Ascending aorta (tissue), 2 donors: ENCODE measurements at regions of chr12 and their contacts with region 1.

Region 1: DNA sequence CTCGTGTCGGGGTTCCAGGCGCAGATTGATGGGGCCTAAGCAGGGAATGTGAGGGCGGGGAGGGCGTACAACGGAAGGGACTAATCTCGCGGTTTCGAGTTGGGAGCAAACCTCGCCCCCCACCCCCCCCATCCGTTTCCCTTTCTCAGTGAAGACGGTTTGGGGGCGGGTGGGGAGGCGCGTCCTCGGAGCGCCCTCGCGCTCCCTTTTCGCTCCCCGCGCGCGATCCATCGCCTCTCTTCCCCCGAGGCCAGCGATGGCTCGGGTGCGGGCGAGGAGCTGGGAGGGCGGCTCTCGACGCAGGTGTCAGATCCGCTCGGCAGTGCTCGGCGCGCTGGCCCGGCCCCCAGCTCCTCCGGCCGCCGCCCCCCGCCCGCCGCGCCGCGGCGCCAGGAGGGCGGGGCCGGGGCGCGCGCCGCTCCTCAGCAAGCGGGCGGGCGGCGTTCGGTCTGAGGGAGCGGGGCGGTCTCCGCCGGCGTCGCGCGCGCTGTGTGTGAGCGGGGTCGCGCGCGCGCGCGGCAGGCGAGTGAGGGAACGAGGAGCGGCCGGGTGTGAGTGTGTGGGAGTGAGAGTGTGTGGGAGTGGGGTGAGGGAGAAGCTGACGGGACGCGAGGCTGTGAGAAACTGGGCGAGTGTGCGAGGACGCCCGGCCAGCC is at the start of gene RIMKLB:
- DNase-seq: peak; percentile 33 to 93
- H3K4me3 ChIP-seq: peak within 1 kb of the TSS; percentile 81 to 92
- H3K27ac ChIP-seq: peak within 1 kb of the TSS; percentile 97 to 99
- H3K4me1 ChIP-seq: peaks cover 2 to 20% of the 10 kb centered on the region in 2 donors
- H3K27me3 ChIP-seq: no peaks in the 10 kb centered on the region
- CTCF ChIP-seq: no peak
- total RNA-seq, gene RIMKLB: 26.0 TPM

Region 2: GRCh38 chr12:7806863-7807487 is 890.6 kb before region 1 on chr12:
- intact Hi-C with region 1: no loop called
- DNase-seq: peak in 1 of 2 donors; percentile 73
- H3K4me3 ChIP-seq: no peak overlapping the region
- H3K27ac ChIP-seq: no peak overlapping the region
- H3K4me1 ChIP-seq: no peaks in the 10 kb centered on the region
- H3K27me3 ChIP-seq: no peaks in the 10 kb centered on the region
- CTCF ChIP-seq: peak; percentile 24 to 70 (median 57)

Region 3: DNA sequence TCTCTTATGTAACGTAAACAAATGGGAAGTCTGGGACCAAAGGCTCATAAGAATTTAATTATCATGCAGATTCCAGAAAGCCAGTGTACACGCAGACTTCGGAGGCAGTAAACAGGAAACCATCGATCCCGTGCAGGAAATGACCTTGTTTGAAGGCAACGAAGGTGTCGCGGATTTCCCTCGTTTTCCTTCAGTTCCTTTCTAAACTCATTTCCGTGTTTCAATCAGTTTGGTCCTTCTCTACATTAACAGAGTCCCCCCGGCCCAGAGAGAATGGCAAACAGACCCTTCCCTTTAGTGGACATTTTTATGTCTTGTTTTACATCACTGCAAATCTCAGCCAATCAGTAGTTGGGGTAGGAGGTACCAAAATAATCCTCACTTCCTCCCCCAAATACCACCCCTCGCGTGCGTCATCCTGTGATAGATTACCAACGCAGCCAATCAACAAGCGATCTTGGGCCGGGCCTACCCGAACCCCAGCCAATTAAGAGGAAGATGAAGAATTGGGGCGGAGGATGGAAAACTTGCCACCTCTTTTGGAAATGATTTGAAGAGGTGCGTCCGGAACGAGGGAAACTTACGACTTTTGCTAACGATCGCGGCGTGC is 671.2 kb before region 1 on chr12:
- intact Hi-C with region 1: loop called (anchors 5 kb)
- DNase-seq: peak; percentile 96 to 99
- H3K4me3 ChIP-seq: peak overlapping the region; percentile 76 to 92
- H3K27ac ChIP-seq: peak overlapping the region; percentile 100
- H3K4me1 ChIP-seq: peaks cover 0 to 4% of the 10 kb centered on the region in 2 donors
- H3K27me3 ChIP-seq: no peaks in the 10 kb centered on the region
- CTCF ChIP-seq: no peak

Region 4: DNA sequence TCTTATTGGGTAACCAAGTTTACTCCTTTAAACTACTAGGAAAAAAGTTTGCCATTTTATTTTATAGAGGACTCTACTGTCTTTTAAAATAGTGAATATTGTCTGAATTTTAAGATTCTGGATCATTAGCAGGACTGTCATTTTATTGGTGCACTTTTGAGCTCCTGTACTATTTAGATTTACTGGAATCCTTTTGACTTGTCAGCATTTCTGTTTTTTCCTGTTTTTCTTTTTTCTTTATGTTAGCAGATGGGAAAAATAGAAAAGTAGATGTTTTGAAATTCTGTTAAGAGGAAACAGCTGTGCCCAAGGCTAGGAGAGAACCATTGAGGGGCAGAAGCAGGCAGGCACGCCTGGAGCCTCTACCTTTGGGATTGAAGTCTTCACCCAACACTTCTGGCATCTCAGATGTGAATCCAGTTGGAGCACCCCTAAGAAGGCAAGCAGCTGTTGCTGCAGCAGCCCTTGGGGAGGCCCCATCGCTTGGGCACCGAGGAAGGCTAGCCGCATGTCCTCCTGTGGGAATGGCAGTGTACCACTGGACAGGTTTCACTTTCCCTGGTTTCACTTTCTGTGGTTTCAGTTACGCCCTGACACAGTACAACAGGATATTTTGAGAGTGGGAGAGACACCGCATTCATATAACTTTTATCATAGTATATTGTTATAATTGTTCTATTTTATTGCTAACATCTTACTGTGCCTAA is 11.7 kb after region 1 on chr12:
- intact Hi-C with region 1: no loop called
- DNase-seq: no peak
- H3K4me3 ChIP-seq: peak overlapping the region; percentile 48 to 60
- H3K27ac ChIP-seq: peak overlapping the region; percentile 48 to 59
- H3K4me1 ChIP-seq: peaks cover 0 to 22% of the 10 kb centered on the region in 2 donors
- H3K27me3 ChIP-seq: no peaks in the 10 kb centered on the region
- CTCF ChIP-seq: no peak

Region 5: GRCh38 chr12:8734873-8735381 is 37.3 kb after region 1 on chr12:
- intact Hi-C with region 1: loop called (anchors 2 kb)
- DNase-seq: no peak
- H3K4me3 ChIP-seq: peak overlapping the region in 1 of 2 donors; percentile 30
- H3K27ac ChIP-seq: peak overlapping the region; percentile 88 to 89
- H3K4me1 ChIP-seq: peaks cover 2 to 41% of the 10 kb centered on the region in 2 donors
- H3K27me3 ChIP-seq: no peaks in the 10 kb centered on the region
- CTCF ChIP-seq: no peak

Region 6: GRCh38 chr12:8779862-8780261 is 82.3 kb after region 1 on chr12:
- intact Hi-C with region 1: loop called (anchors 5 kb)
- DNase-seq: no peak
- H3K4me3 ChIP-seq: no peak overlapping the region
- H3K27ac ChIP-seq: peak overlapping the region; percentile 66 to 71
- H3K4me1 ChIP-seq: peaks cover 0 to 18% of the 10 kb centered on the region in 2 donors
- H3K27me3 ChIP-seq: no peaks in the 10 kb centered on the region
- CTCF ChIP-seq: no peak